Psoas muscle (tissue), 8 donors: ENCODE measurements at regions of chr22 and their contacts with region 1.

Region 1: GRCh38 chr22:35947794-35948425 is 80.7 kb downstream of the RBFOX2 start:
- DNase-seq: no peak
- ATAC-seq: no peak
- H3K4me3 ChIP-seq: no peak overlapping the region
- H3K27ac ChIP-seq: no peak overlapping the region
- H3K4me1 ChIP-seq: peaks cover 11% of the 10 kb centered on the region
- H3K27me3 ChIP-seq: no peaks in the 10 kb centered on the region
- CTCF ChIP-seq: no peak

Region 2: DNA sequence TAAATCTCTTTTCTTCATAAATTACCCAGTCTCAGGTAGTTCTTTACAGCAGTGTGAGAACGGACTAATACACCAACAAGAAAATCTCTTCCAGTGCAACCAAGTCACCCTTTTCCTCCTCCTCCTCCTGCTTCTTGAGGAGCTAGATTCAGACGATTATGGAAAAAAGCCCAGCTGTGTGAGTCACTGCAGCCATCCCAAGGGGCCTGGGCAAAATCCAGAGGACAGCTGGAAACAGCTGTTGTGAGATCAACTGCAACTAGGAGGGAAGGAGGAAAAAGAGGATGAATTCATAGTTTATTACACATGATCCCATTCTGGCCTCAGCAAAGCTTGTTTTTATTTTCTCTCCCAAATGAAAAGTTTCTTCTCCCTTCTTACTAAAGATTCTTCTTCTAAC is 47.9 kb after region 1 on chr22:
- intact Hi-C with region 1: loop called in 1 of 2 experiments (anchors 10 kb)
- DNase-seq: peak; percentile 73 to 84
- ATAC-seq: peak; percentile 47 to 82 (median 66)
- H3K4me3 ChIP-seq: no peak overlapping the region
- H3K27ac ChIP-seq: peak overlapping the region; percentile 52
- H3K4me1 ChIP-seq: peaks cover 21% of the 10 kb centered on the region
- H3K27me3 ChIP-seq: no peaks in the 10 kb centered on the region
- CTCF ChIP-seq: no peak